Ascending aorta (tissue), 2 donors: ENCODE measurements at regions of chr12 and their contacts with region 1.

Region 1: GRCh38 chr12:14845350-14845750 is 2.0 kb upstream of the ART4 start:
- DNase-seq: peak in 1 of 2 donors; percentile 79
- H3K4me3 ChIP-seq: no peak overlapping the region
- H3K27ac ChIP-seq: peak overlapping the region; percentile 73 to 87
- H3K4me1 ChIP-seq: peaks cover 12 to 72% of the 10 kb centered on the region in 2 donors
- H3K27me3 ChIP-seq: no peaks in the 10 kb centered on the region
- CTCF ChIP-seq: peak; percentile 64 to 80 (median 76)

Region 2: GRCh38 chr12:14803011-14803829 is 42.1 kb before region 1 on chr12 and contains the starts of genes C12orf60 and WBP11:
- intact Hi-C with region 1: loop called (anchors 2 kb)
- DNase-seq: peak; percentile 95 to 98
- H3K4me3 ChIP-seq: peak within 1 kb of the TSS; percentile 84 to 98
- H3K27ac ChIP-seq: peak within 1 kb of the TSS; percentile 90 to 97
- H3K4me1 ChIP-seq: peaks cover 3 to 9% of the 10 kb centered on the region in 2 donors
- H3K27me3 ChIP-seq: no peaks in the 10 kb centered on the region
- CTCF ChIP-seq: no peak
- total RNA-seq, gene C12orf60: not detected
- total RNA-seq, gene WBP11: 6.7 TPM

Region 3: GRCh38 chr12:14948672-14949071 is 103.3 kb after region 1 on chr12:
- intact Hi-C with region 1: loop called (anchors 5 kb)
- DNase-seq: peak in 1 of 2 donors; percentile 81
- H3K4me3 ChIP-seq: peak overlapping the region in 1 of 2 donors; percentile 50
- H3K27ac ChIP-seq: peak overlapping the region; percentile 91 to 96
- H3K4me1 ChIP-seq: peaks cover 9 to 56% of the 10 kb centered on the region in 2 donors
- H3K27me3 ChIP-seq: no peaks in the 10 kb centered on the region
- CTCF ChIP-seq: no peak

Region 4: GRCh38 chr12:15151161-15152120 is 306.1 kb after region 1 on chr12:
- intact Hi-C with region 1: loop called (anchors 5 kb)
- DNase-seq: no peak
- H3K4me3 ChIP-seq: peak overlapping the region in 1 of 2 donors; percentile 42
- H3K27ac ChIP-seq: peak overlapping the region; percentile 74 to 81
- H3K4me1 ChIP-seq: peaks cover 23 to 41% of the 10 kb centered on the region in 2 donors
- H3K27me3 ChIP-seq: no peaks in the 10 kb centered on the region
- CTCF ChIP-seq: peak; percentile 35 to 59 (median 48)

Region 5: DNA sequence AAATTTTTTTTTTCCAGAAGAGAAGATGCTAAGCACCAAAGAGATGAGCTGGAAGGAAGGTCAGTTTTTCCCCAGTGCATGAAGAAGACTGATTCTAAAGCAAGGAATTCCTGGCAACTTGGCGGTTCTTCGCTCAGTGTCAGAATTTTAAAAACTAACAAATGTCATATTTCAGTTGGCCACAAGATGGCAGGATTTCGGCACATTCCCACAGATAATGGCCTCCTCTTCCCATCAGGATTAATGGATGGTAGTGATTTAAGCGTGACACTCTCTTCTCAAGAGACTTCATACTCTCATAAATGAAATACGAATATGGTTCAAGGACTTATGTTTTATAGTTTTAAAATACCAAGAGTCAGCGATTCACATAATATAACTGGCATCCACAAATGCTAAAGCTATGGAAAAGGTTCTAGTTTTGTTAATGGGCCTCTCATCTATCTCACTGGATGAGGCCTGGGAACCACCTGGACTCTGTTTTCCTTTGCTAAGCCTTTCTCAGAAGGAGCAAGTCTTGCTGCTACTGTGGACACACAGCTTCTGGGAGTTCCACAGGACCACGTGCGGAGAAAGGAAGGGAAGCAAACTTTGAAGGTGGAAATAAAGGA is 430.8 kb after region 1 on chr12:
- intact Hi-C with region 1: loop called (anchors 5 kb)
- DNase-seq: no peak
- H3K4me3 ChIP-seq: no peak overlapping the region
- H3K27ac ChIP-seq: peak overlapping the region; percentile 92 to 95
- H3K4me1 ChIP-seq: peaks cover 12 to 33% of the 10 kb centered on the region in 2 donors
- H3K27me3 ChIP-seq: no peaks in the 10 kb centered on the region
- CTCF ChIP-seq: peak; percentile 57 to 81 (median 71)